Lower leg skin (tissue), 4 donors: ENCODE measurements at regions of chr18 and their contacts with region 1.

Region 1: DNA sequence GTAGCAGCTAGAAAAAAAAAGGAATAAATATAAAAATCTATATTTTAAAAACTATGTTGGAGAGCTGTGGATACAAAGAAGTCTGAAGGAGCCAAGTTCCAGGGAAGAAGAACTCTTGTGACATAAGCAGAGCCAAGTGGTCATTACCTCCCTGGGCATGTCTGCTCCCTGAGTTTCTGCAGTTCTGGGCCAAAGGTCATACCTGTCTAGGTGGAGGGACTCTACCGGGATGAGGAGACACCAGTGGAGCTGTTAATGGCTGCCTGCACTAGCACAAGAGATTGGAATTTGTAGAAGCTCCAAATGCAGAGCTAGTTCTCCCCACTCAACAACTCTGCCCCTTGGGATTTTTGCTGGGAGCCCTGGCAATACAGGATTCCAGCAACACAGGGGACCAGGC is 89.8 kb downstream of the ARHGAP28 start:
- DNase-seq: no peak
- H3K4me3 ChIP-seq: no peak overlapping the region
- CTCF ChIP-seq: no peak
- POLR2A ChIP-seq: no peak

Region 2: GRCh38 chr18:6854811-6855210 is 35.5 kb after region 1 on chr18:
- intact Hi-C with region 1: loop called (anchors 5 kb)
- DNase-seq: no peak
- H3K4me3 ChIP-seq: no peak overlapping the region
- CTCF ChIP-seq: no peak
- POLR2A ChIP-seq: no peak